PC-3 (cell line): ENCODE measurements at regions of chr1 and their contacts with region 1.

Region 1: DNA sequence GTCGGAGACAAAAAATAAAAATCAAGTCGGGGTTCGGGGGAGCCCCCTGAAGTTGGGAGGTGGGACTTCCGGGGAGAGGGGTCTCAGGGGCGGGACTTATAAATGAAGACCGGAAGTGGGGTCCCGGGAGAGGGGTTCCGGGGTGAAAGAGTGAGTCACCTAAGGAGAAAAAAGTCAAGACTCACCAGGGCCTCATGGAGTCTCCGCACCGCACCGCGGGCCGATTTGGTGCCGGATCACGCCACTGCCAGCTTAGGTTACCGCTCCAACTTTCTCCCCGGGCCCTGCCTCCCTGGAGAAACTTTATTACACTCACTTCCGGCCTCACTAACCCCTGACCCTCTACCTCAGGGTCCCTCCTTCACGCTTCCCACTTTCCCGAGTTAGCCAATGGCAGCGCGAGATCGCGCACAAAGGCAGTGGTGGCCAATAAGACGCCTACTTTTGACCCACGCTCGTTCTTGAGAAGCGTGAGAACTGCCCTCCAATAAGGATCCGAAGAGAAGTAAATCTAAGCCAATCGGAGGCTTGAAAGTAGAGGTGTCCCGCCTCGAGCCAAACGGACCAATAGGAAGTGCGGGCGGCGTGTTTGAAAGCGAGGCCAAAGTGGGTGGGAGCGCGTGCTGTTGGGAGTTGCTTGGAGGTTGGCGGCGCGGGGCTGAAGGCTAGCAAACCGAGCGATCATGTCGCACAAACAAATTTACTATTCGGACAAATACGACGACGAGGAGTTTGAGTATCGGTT is at the start of gene CKS1B:
- DNase-seq: peak; percentile 100
- ATAC-seq: peak; percentile 73
- H3K4me3 ChIP-seq: peak within 1 kb of the TSS; percentile 80
- H3K27ac ChIP-seq: peak within 1 kb of the TSS; percentile 96
- H3K4me1 ChIP-seq: peaks cover 55% of the 10 kb centered on the region
- H3K27me3 ChIP-seq: no peaks in the 10 kb centered on the region
- CTCF ChIP-seq: no peak
- total RNA-seq, gene CKS1B: 330 and 390 TPM in 2 replicates

Region 2: GRCh38 chr1:154352581-154353459 is 621.4 kb before region 1 on chr1:
- CTCF ChIA-PET with region 1: no interaction called
- POLR2A ChIA-PET with region 1: interaction called, 26 read pairs
- intact Hi-C with region 1: no loop called
- DNase-seq: peak; percentile 37
- ATAC-seq: peak; percentile 76
- H3K4me3 ChIP-seq: peak overlapping the region; percentile 69
- H3K27ac ChIP-seq: no peak overlapping the region
- H3K4me1 ChIP-seq: peaks cover 18% of the 10 kb centered on the region; the same call in 1 of the 2 replicates
- H3K27me3 ChIP-seq: no peaks in the 10 kb centered on the region
- CTCF ChIP-seq: no peak; the same call in 1 of the 2 replicates

Region 3: GRCh38 chr1:154955718-154956543 is 18.3 kb before region 1 on chr1 and contains the start of gene PBXIP1:
- CTCF ChIA-PET with region 1: interaction called, 8 read pairs
- POLR2A ChIA-PET with region 1: interaction called, 26 read pairs
- intact Hi-C with region 1: loop called (anchors 1 kb)
- DNase-seq: peak; percentile 95
- ATAC-seq: peak; percentile 86
- H3K4me3 ChIP-seq: peak within 1 kb of the TSS; percentile 69
- H3K27ac ChIP-seq: 0 out of 2 replicates have a peak within 1 kb of the TSS, but pooled peaks have one; percentile 8
- H3K4me1 ChIP-seq: peaks cover 21% of the 10 kb centered on the region
- H3K27me3 ChIP-seq: no peaks in the 10 kb centered on the region
- CTCF ChIP-seq: peak; percentile 59
- total RNA-seq, gene PBXIP1: 35.4 and 43.1 TPM in 2 replicates

Region 4: GRCh38 chr1:155001675-155002463 is 27.6 kb after region 1 on chr1:
- CTCF ChIA-PET with region 1: interaction called, 5 read pairs
- POLR2A ChIA-PET with region 1: interaction called, 8 read pairs
- intact Hi-C with region 1: loop called (anchors 1 kb)
- DNase-seq: peak; percentile 99
- ATAC-seq: peak; percentile 54
- H3K4me3 ChIP-seq: peak overlapping the region; percentile 83
- H3K27ac ChIP-seq: peak overlapping the region; percentile 77
- H3K4me1 ChIP-seq: peaks cover 49% of the 10 kb centered on the region
- H3K27me3 ChIP-seq: no peaks in the 10 kb centered on the region
- CTCF ChIP-seq: peak; percentile 81

Region 5: GRCh38 chr1:155063550-155064110 is 89.4 kb after region 1 on chr1 and contains the start of gene EFNA4:
- CTCF ChIA-PET with region 1: no interaction called
- POLR2A ChIA-PET with region 1: interaction called, 9 read pairs
- intact Hi-C with region 1: loop called (anchors 5 kb)
- DNase-seq: peak; percentile 90
- ATAC-seq: peak; percentile 76
- H3K4me3 ChIP-seq: peak within 1 kb of the TSS; percentile 76
- H3K27ac ChIP-seq: 0 out of 2 replicates have a peak within 1 kb of the TSS, but pooled peaks have one; percentile 3
- H3K4me1 ChIP-seq: peaks cover 21% of the 10 kb centered on the region
- H3K27me3 ChIP-seq: no peaks in the 10 kb centered on the region
- CTCF ChIP-seq: no peak
- total RNA-seq, gene EFNA4: 36.7 and 37.4 TPM in 2 replicates